ENCODE measurements at regions of chr14 and their contacts with region 1.

Region 1: DNA sequence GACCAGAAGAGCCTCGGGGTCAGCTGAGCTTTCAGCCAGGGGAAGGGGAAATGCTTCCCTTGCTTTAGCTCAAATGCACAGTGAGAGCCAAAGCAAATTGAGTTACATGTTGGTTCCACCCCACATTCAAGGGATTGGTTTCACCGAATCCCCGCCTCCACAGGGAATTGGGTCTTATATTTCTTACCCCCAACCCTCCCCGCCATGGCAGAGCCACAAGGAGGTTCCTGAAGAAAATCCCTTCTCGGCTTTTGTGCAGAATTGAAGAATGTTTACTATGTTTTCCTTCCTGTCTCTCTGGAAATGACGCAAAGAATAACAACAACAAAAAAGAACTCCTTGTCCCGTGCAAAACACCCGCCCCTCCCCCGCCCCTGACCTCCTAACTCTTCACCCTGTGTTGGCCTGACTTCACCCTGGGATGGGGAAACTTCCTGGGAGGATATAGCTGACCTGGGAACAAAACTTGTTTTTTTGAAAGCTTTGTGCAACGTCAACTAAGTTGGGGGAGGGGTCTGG is 21.9 kb upstream of the CIPC start:
- DNase-seq: no peak
- H3K4me3 Mint-ChIP-seq: no peak overlapping the region
- H3K27ac Mint-ChIP-seq: no peak overlapping the region
- H3K4me1 Mint-ChIP-seq: no peaks in the 10 kb centered on the region
- H3K27me3 Mint-ChIP-seq: peaks cover 27% of the 10 kb centered on the region

Region 2: DNA sequence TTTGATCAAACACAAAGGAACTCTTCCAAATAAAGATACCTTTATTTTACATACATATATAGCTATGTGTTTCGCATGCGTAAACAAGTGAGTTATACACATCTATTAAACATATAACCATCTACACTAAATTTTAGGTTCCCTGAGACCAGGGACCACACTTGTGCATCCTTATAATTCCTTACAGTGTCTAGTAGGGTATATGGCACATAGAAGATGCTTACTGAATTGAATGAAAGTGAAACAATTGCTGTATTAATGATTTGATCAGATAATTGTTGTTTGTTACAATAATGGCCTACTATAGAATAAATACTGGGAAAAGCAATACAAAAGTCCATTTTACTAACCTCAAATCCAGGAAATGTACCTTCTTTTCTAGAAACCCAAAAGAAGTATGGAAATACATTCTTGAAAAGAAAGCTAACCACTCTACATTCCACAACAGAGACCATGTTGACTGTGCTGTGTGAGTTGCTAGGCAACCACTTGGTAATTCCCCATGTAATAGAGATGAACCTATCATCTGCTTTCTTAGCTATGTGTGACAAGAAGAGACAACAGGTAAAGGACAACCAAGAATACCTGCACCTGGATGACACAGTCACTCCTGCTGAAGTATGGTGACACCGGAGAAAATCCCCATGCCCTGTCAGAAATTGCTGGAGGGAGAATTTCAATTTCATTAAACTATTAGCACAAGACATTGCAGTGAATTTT is 10.0 kb after region 1 on chr14:
- CTCF ChIA-PET with region 1: interaction called, 45 read pairs
- DNase-seq: no peak
- H3K4me3 Mint-ChIP-seq: no peak overlapping the region
- H3K27ac Mint-ChIP-seq: no peak overlapping the region
- H3K4me1 Mint-ChIP-seq: peaks cover 13% of the 10 kb centered on the region
- H3K27me3 Mint-ChIP-seq: peaks cover 32% of the 10 kb centered on the region

Region 3: GRCh38 chr14:77097700-77098528 is 21.7 kb after region 1 on chr14 and contains the start of gene CIPC:
- CTCF ChIA-PET with region 1: interaction called, 28 read pairs
- DNase-seq: peak; percentile 100
- H3K4me3 Mint-ChIP-seq: peak within 1 kb of the TSS; percentile 99
- H3K27ac Mint-ChIP-seq: peak within 1 kb of the TSS; percentile 97
- H3K4me1 Mint-ChIP-seq: peaks cover 34% of the 10 kb centered on the region
- H3K27me3 Mint-ChIP-seq: peaks cover 6% of the 10 kb centered on the region